ENCODE measurements at regions of chr3 and their contacts with region 1.

Region 1: DNA sequence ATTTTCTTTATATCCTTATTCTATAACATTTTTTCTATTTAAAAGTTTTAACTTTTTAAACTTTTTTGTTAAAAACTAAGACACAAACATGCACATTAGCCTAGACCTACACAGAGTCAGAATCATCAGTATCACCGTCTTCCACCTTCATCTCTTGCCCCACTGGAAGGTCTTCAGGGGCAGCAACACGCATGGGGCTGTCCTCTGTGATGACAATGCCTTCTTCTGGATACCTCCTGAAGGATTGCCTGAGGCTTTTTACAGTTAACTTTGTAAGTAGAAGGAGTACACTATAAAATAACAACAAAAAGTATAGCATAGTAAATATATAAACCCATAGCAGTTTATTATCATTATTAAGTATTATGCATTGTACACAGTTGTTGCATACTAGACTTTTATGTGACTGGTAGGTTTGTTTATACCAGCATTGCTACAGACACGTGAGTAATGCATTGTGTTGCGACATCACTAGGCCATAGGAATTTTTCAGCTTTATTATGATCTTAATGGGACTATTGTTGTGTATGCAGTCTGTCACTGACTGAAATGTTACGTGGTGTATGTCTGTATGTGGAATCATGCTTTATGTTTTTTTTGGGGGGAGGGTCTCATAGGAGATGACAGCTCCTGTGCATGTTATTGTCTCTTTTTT is 18.2 kb downstream of the ATP1B3 start:
- DNase-seq: peak; percentile 46
- H3K27ac ChIP-seq: peak overlapping the region; percentile 61
- CTCF ChIP-seq: no peak

Region 2: GRCh38 chr3:141881702-141882101 is 12.9 kb before region 1 on chr3:
- CTCF ChIA-PET with region 1: interaction called, 10 read pairs
- POLR2A ChIA-PET with region 1: interaction called, 3 read pairs
- DNase-seq: no peak
- H3K27ac ChIP-seq: no peak overlapping the region
- CTCF ChIP-seq: no peak

Measured in RWPE1 (cell line).